H1 (cell line): ENCODE measurements at regions of chr9 and their contacts with region 1.

Region 1: DNA sequence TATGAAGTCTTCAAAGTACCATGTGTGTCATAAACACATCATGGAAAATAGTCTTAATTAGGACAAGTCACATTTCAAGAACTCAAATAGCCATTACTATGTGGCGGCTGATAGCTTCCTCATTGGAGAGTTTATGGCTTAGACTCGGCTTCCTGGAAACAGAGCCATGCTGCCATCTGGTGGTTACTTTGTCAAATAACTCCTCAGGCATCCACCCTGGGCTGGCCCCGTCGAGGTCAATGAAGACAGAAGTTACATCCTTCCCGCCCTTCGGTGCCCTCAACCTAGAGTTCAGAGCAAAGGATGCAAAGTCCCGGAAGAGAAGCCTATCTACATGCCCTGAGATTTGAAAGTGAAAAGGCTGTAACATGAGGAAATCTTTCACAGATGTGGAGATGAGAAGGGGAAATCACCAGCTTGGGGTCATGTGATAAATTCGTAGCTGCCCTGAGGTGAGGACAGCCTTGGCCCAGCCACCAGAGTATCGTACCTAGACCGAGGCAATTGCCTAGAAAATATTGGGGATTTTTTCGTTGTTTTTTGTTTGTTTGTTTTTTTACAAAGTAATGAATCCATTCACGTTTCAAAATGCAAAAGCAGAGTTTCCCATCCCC is 45.5 kb upstream of the ZNF169 start:
- DNase-seq: peak; percentile 60 to 83
- H3K4me3 ChIP-seq: no peak overlapping the region
- H3K27ac ChIP-seq: no peak overlapping the region
- H3K4me1 ChIP-seq: peaks cover 0 to 10% (median 4%) of the 10 kb centered on the region in 4 experiments; a peak in 5 of 7 replicates
- H3K27me3 ChIP-seq: no peaks in the 10 kb centered on the region
- CTCF ChIP-seq: peak; percentile 39 to 88 (median 83)
- EP300 ChIP-seq: no peak
- POLR2A ChIP-seq: no peak
- RAD21 ChIP-seq: peak; percentile 96 to 97

Region 2: GRCh38 chr9:93968451-93969327 is 244.9 kb before region 1 on chr9:
- CTCF ChIA-PET with region 1: interaction called, 13 read pairs
- POLR2A ChIA-PET with region 1: interaction called, 3 read pairs
- DNase-seq: no peak
- H3K4me3 ChIP-seq: no peak overlapping the region
- H3K27ac ChIP-seq: no peak overlapping the region
- H3K4me1 ChIP-seq: no peaks in the 10 kb centered on the region
- H3K27me3 ChIP-seq: no peaks in the 10 kb centered on the region; a peak in 1 of 7 replicates
- CTCF ChIP-seq: no peak
- EP300 ChIP-seq: no peak
- POLR2A ChIP-seq: no peak
- RAD21 ChIP-seq: no peak

Region 3: DNA sequence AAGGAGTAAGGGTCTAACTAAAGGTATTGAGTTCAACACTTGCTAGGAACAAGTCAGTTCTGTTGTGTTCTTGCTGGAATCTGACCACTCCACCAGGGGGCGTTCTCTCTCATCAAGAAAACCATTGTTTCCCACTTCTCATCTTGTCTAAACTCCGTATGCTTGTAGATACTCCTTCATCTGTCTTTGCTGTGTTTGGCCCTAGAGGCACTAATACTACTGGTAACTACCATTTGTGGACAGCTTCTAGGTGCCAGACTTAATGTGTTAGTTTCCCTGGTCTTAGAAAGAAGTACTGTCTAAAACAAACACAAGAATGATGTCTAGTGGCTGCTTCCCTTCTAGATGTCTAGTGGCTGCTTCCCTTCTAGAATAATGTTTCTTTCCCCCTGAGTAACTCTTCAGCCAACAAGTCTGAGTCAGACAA is 148.1 kb before region 1 on chr9:
- CTCF ChIA-PET with region 1: interaction called, 65 read pairs
- POLR2A ChIA-PET with region 1: interaction called, 8 read pairs
- DNase-seq: peak; percentile 60 to 82
- H3K4me3 ChIP-seq: no peak overlapping the region
- H3K27ac ChIP-seq: no peak overlapping the region
- H3K4me1 ChIP-seq: peaks cover 0 to 2% (median 0%) of the 10 kb centered on the region in 4 experiments; a peak in 2 of 7 replicates
- H3K27me3 ChIP-seq: no peaks in the 10 kb centered on the region
- CTCF ChIP-seq: peak in 2 of 3 experiments; percentile 73 to 87; a peak in 3 of 4 replicates
- EP300 ChIP-seq: no peak
- POLR2A ChIP-seq: no peak
- RAD21 ChIP-seq: peak; percentile 82 to 87

Region 4: GRCh38 chr9:94150279-94150828 is 63.3 kb before region 1 on chr9:
- CTCF ChIA-PET with region 1: interaction called, 10 read pairs
- POLR2A ChIA-PET with region 1: interaction called, 5 read pairs
- DNase-seq: no peak
- H3K4me3 ChIP-seq: no peak overlapping the region
- H3K27ac ChIP-seq: no peak overlapping the region
- H3K4me1 ChIP-seq: peaks cover 10 to 17% (median 13%) of the 10 kb centered on the region in 4 experiments
- H3K27me3 ChIP-seq: no peaks in the 10 kb centered on the region; a peak in 1 of 7 replicates
- CTCF ChIP-seq: no peak
- EP300 ChIP-seq: no peak
- POLR2A ChIP-seq: no peak
- RAD21 ChIP-seq: no peak

Region 5: GRCh38 chr9:94166237-94166963 is 47.2 kb before region 1 on chr9:
- CTCF ChIA-PET with region 1: interaction called, 9 read pairs
- POLR2A ChIA-PET with region 1: interaction called, 16 read pairs
- DNase-seq: peak; percentile 93 to 97
- H3K4me3 ChIP-seq: peak overlapping the region; percentile 76 to 89 (median 84)
- H3K27ac ChIP-seq: peak overlapping the region; percentile 99
- H3K4me1 ChIP-seq: no peaks in the 10 kb centered on the region
- H3K27me3 ChIP-seq: no peaks in the 10 kb centered on the region
- CTCF ChIP-seq: no peak
- EP300 ChIP-seq: peak in 1 of 2 experiments; percentile 81; a peak in 1 of 3 replicates
- POLR2A ChIP-seq: peak; percentile 24 to 96
- RAD21 ChIP-seq: no peak; a peak in 1 of 4 replicates

Region 6: DNA sequence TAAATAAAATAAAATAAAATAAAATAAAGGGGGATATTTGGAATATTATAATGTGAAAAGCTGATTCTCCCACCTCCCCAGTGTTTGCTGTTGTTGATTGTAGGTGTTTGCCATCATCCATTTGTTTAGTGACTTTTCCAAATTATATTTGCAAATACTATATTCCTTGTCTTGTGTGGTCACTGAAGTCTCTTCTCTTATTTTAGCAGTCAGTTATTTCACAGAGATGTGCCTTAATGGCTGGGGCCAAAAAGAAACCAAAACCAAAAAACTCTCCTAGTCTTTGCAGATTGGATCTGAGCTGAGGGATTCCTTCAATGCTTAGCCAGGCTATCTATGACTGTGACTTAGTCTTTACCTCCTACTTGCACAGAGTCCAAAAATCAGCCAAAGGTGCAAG is 25.4 kb before region 1 on chr9:
- CTCF ChIA-PET with region 1: interaction called, 12 read pairs
- POLR2A ChIA-PET with region 1: no interaction called
- DNase-seq: no peak
- H3K4me3 ChIP-seq: no peak overlapping the region
- H3K27ac ChIP-seq: no peak overlapping the region
- H3K4me1 ChIP-seq: no peaks in the 10 kb centered on the region
- H3K27me3 ChIP-seq: no peaks in the 10 kb centered on the region
- CTCF ChIP-seq: no peak
- EP300 ChIP-seq: no peak
- POLR2A ChIP-seq: no peak
- RAD21 ChIP-seq: no peak

Region 7: DNA sequence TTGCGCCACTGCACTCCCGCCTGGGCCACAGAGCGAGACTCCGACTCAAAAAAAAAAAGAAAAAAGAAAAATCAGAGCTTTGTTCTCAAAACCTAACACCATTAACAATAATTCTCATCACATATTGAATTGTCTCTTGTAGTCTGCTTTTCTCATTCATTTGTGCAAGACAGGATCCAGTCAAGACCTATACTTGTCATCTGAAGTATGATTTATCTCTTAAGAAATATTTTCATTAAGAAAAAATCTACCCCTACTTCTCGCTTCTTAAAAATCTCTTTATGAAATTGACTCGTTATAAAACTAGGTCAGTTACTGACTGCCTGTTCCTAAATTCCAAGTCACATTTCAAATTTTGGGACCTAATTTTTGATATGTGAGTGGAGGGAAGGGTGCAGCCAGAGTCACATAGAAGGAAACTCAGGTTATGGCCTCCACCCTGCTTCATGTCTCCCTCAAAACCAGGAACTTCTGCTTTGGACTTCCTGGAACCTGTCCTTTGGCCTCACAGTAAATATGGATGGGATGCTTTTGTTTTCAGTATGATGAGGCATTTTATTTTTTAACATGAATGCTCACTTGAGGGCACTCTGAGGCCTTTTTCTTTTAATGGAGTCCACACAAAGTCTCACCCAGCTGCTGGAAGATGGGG is 64.4 kb after region 1 on chr9:
- CTCF ChIA-PET with region 1: no interaction called
- POLR2A ChIA-PET with region 1: no interaction called
- DNase-seq: no peak
- H3K4me3 ChIP-seq: no peak overlapping the region
- H3K27ac ChIP-seq: no peak overlapping the region
- H3K4me1 ChIP-seq: 0 out of 7 replicates have a peak, but pooled peaks cover 0 to 3% (median 0%) of the 10 kb centered on the region in 4 experiments
- H3K27me3 ChIP-seq: no peaks in the 10 kb centered on the region
- CTCF ChIP-seq: no peak
- EP300 ChIP-seq: no peak
- POLR2A ChIP-seq: no peak
- RAD21 ChIP-seq: no peak